Activated CD4-positive, alpha-beta memory T cell treated with anti-CD3 and anti-CD28 coated beads, Interleukin-2, amount 10 ng/mL, durations not matched to agents 7 days and 5 days (primary cell): ENCODE measurements at regions of chr1 and their contacts with region 1.

Region 1: DNA sequence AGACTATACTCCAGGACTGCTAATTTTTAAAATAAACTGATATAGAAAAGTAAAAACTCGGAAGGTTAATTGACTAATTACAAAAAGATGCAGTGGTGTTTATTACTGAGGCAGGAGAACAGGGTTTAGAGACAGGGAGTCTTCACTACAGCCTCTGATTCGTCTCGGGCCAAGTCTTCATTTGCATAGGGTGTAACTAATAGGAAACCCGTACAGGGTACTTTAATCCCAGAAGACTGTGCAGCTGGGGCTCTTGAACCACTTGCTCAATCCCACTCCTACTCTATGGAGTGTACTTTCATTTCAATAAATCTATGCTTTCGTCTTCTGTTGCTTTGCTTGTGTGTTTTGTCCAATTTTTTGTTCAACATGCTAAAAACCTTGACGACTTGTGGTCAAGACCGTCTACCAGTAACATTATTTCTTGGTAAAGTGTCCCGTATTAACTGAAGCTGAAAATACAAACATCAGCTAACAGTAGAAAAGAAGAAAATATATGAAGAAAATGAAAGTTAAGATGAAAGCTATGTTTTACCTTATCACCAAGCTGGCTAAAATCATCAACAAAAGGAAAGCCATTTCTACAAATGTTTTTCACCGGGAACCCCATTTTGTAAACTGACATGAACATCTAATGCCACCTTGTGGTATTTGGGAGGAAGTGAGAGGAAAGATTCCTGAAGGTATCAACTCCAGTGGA is 8.0 kb downstream of the SDHB start:
- DNase-seq: no peak
- H3K4me3 Mint-ChIP-seq: no peak overlapping the region
- H3K27ac Mint-ChIP-seq: peak overlapping the region; percentile 64
- H3K4me1 Mint-ChIP-seq: peaks cover 22% of the 10 kb centered on the region
- H3K27me3 Mint-ChIP-seq: no peaks in the 10 kb centered on the region

Region 2: DNA sequence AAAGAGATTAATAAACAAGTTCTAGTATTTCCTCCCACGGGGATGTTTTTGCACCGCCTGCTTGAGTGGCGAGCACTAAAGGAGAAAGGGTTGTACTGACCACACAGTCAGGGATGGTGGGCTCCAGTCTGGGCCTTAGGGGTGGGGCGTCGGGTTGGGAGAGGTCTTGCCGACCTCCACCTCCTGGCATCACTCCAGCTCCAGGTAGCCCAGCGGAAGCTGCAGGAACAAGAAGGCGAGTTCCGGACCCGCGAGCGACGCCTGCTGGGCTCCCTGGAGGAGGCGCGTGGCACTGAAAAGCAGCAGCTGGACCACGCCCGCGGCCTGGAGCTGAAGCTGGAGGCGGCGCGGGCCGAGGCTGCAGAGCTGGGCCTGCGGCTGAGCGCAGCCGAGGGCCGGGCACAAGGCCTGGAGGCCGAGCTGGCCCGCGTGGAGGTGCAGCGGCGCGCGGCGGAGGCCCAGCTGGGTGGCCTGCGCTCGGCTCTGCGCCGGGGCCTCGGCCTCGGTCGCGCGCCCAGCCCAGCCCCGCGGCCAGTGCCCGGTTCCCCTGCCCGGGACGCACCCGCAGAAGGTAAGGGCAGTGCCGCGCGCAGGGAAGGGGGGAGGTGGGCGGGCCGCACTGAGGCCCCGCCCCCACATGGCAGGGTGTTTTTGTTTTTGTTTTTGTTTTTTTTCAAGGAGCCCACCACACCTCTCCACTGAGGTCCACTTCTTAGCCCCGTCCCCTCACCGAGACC is 85.1 kb before region 1 on chr1:
- CTCF ChIA-PET with region 1: interaction called, 45 read pairs
- POLR2A ChIA-PET with region 1: interaction called, 4 read pairs
- DNase-seq: peak; percentile 86
- H3K4me3 Mint-ChIP-seq: peak overlapping the region; percentile 70
- H3K27ac Mint-ChIP-seq: peak overlapping the region; percentile 62
- H3K4me1 Mint-ChIP-seq: peaks cover 13% of the 10 kb centered on the region
- H3K27me3 Mint-ChIP-seq: no peaks in the 10 kb centered on the region

Region 3: GRCh38 chr1:17032741-17033140 is 13.0 kb before region 1 on chr1:
- CTCF ChIA-PET with region 1: interaction called, 12 read pairs
- POLR2A ChIA-PET with region 1: no interaction called
- DNase-seq: no peak
- H3K4me3 Mint-ChIP-seq: no peak overlapping the region
- H3K27ac Mint-ChIP-seq: no peak overlapping the region
- H3K4me1 Mint-ChIP-seq: peaks cover 6% of the 10 kb centered on the region
- H3K27me3 Mint-ChIP-seq: no peaks in the 10 kb centered on the region

Region 4: GRCh38 chr1:17098446-17099251 is 52.9 kb after region 1 on chr1:
- CTCF ChIA-PET with region 1: no interaction called
- POLR2A ChIA-PET with region 1: no interaction called
- DNase-seq: no peak
- H3K4me3 Mint-ChIP-seq: no peak overlapping the region
- H3K27ac Mint-ChIP-seq: no peak overlapping the region
- H3K4me1 Mint-ChIP-seq: no peaks in the 10 kb centered on the region
- H3K27me3 Mint-ChIP-seq: peaks cover 6% of the 10 kb centered on the region